ENCODE measurements at regions of chr7 and their contacts with region 1.

Region 1: GRCh38 chr7:55271069-55271626 is 94.0 kb upstream of the LANCL2 start:
- DNase-seq: peak; percentile 59
- H3K4me3 ChIP-seq: no peak overlapping the region
- H3K27ac ChIP-seq: no peak overlapping the region
- H3K4me1 ChIP-seq: no peaks in the 10 kb centered on the region
- H3K27me3 ChIP-seq: peaks cover 14% of the 10 kb centered on the region; the same call in 1 of the 2 replicates

Region 2: GRCh38 chr7:54339073-54339472 is 932.1 kb before region 1 on chr7:
- in situ Hi-C with region 1: no loop called
- DNase-seq: peak; percentile 8
- H3K4me3 ChIP-seq: no peak overlapping the region
- H3K27ac ChIP-seq: no peak overlapping the region
- H3K4me1 ChIP-seq: no peaks in the 10 kb centered on the region
- H3K27me3 ChIP-seq: no peaks in the 10 kb centered on the region

Region 3: DNA sequence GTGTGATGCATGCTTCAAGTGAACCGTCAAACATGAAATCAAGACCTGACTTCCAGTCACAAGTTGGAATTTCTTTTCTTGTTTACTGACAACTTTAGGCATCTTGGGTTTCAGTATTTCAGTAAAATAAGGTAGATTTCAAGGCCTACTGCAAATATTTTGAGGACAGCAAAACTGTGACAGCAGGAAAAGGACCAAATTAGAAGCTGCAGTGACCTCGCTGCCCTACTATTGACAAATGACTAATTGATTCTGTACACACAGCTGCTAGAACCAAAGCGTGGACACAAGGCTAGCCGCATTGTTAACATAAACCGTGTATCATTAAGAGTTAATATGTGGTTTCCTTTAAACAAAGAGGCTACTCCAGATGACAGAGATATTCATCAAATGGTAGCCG is 406.5 kb before region 1 on chr7:
- in situ Hi-C with region 1: no loop called
- DNase-seq: no peak
- H3K4me3 ChIP-seq: no peak overlapping the region
- H3K27ac ChIP-seq: no peak overlapping the region
- H3K4me1 ChIP-seq: no peaks in the 10 kb centered on the region
- H3K27me3 ChIP-seq: no peaks in the 10 kb centered on the region; the same call in 1 of the 2 replicates

Region 4: DNA sequence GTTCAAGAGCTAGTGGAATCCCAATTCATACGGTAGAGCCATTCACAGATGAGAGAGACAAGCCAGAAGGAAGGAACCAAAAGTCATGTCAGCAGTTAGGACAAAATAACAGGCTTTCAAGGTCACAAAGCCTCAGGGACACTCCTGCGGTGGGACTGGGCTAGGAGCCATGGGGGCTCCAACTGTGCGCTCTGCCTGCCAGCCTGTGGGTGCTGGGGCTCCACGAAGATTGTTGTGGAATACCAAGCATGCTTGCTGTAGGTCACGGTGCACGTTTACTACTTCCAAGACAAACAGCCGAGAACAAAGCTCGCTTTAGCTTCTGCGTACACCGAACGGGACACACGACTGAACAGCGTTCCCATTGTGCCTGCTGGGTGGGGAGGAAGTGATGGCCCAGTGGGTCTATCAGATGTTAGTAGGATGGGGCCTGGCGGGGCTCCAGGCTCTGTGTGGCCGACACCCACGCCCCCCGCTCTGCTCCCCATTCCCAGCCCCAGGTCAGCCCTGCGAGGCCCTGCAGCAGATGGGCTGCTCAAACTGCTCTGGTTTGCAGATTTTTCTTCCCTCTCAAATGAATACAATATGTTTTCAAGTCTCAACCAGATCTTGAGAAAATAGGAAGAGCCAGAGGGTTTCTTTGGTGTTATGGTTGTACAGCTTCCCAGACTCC is 93.4 kb before region 1 on chr7:
- in situ Hi-C with region 1: no loop called
- DNase-seq: no peak
- H3K4me3 ChIP-seq: no peak overlapping the region
- H3K27ac ChIP-seq: no peak overlapping the region
- H3K4me1 ChIP-seq: no peaks in the 10 kb centered on the region
- H3K27me3 ChIP-seq: no peaks in the 10 kb centered on the region

Region 5: DNA sequence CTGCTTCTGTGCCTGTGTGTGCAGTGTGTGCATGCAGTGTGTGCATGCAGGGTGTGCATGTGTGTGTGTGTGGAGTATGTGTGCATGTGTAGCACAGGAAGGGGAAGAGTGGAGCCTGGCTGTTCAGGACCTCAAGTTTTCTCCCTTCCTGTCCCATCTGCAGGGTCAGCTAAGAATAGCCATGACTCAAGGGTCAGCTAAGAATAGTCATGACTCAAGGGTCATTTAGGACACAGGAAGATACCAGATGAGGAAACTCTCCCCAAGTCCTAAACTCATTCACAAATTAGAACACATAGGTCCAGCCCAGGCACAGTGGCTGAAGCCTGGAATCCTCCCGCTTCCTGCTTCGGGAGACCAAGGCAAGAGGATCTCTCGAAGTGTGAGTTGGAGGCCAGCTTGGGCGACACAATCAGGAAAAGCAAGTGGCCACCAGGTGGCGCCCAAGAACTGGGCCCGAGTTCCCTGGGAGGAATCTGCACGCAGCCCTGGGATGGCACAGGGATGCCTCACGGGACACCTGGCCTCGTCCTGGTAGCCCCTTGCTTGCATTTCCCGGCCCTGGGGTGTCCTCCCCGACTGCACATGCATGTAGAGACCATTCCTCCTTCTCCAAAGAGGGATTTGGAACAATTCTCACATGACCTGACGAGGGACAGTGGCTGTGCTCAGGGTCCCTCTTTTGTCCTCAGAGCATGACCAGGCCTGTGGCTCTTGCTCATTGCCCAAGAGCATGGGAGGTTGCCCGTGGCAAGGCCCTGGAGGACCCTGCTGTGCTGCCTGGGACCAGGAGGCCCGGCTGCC is 322.6 kb after region 1 on chr7:
- in situ Hi-C with region 1: loop called (anchors 10 kb)
- DNase-seq: peak; percentile 69
- H3K4me3 ChIP-seq: no peak overlapping the region
- H3K27ac ChIP-seq: no peak overlapping the region
- H3K4me1 ChIP-seq: no peaks in the 10 kb centered on the region
- H3K27me3 ChIP-seq: 0 out of 2 replicates have a peak, but pooled peaks cover 6% of the 10 kb centered on the region

Region 6: GRCh38 chr7:56174810-56175760 is 903.9 kb after region 1 on chr7:
- in situ Hi-C with region 1: no loop called
- DNase-seq: peak; percentile 13
- H3K4me3 ChIP-seq: 0 out of 2 replicates have a peak overlapping the region, but pooled peaks have one; percentile 11
- H3K27ac ChIP-seq: no peak overlapping the region
- H3K4me1 ChIP-seq: no peaks in the 10 kb centered on the region
- H3K27me3 ChIP-seq: no peaks in the 10 kb centered on the region